ENCODE measurements at regions of chr13 and their contacts with region 1.

Region 1: GRCh38 chr13:24220086-24220703 is 59.7 kb downstream of the SPATA13 start:
- DNase-seq: peak in 1 of 2 donors; percentile 72
- H3K4me3 ChIP-seq: no peak overlapping the region
- H3K27ac ChIP-seq: peak overlapping the region; percentile 30 to 39
- H3K4me1 ChIP-seq: peaks cover 4 to 6% of the 10 kb centered on the region in 2 donors
- H3K27me3 ChIP-seq: no peaks in the 10 kb centered on the region
- CTCF ChIP-seq: peak; percentile 71 to 87 (median 79)
- POLR2A ChIP-seq: no peak

Region 2: DNA sequence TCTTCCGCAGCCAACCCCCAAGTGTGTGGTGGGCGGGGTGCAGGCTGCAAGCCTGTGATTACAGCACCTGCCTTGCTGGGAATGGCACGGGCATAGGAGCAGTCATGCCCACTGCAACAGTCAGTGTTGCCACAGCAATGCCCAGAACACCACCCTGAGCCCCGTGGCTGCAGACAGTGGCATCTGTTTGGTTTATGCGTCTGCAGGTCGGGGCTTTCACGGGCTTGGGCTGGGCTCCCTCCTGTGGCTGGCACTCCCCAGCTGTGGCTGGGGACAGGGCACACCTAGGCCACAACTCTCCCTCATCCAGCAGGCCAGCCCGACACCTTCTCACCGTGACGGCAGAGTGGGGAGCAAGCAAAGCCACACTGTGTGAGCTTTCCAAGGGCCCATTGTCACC is 207.5 kb before region 1 on chr13:
- intact Hi-C with region 1: loop called (anchors 10 kb)
- DNase-seq: no peak
- H3K4me3 ChIP-seq: no peak overlapping the region
- H3K27ac ChIP-seq: no peak overlapping the region
- H3K4me1 ChIP-seq: no peaks in the 10 kb centered on the region
- H3K27me3 ChIP-seq: no peaks in the 10 kb centered on the region
- CTCF ChIP-seq: no peak
- POLR2A ChIP-seq: no peak

Region 3: DNA sequence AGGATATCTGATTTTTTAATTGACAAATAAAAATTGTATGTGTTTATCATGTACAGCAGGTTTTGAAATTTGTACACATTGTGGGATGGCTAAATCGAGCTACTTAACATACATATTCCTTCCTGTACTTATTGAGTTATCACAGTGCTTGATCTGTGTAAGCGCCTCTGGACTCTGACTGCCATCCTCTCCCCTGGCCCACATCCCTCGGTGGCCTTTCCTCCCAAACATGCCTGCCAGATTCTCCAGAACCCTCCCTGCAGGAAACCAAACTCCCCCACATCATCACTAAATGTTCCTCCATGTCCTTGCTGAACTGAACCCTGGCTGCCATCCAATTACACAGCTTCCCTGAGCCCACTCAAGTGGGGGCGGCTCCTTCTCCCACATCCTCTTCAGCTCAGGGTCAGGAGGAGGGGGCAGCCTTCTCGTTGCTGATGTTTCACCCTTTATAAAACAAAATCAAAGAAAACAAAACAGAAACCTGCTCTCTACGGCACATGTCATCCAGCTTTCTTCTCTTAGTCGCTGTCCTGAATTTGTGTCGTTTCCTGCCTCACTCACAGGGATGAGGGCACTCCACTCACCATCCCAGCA is 156.8 kb before region 1 on chr13:
- intact Hi-C with region 1: loop called (anchors 10 kb)
- DNase-seq: peak; percentile 43 to 65
- H3K4me3 ChIP-seq: no peak overlapping the region
- H3K27ac ChIP-seq: peak overlapping the region; percentile 69 to 71
- H3K4me1 ChIP-seq: no peaks in the 10 kb centered on the region
- H3K27me3 ChIP-seq: no peaks in the 10 kb centered on the region
- CTCF ChIP-seq: no peak
- POLR2A ChIP-seq: no peak

Measured in uterus (tissue), 4 donors.